Endothelial cell of umbilical vein (primary cell): ENCODE measurements at regions of chr12 and their contacts with region 1.

Region 1: DNA sequence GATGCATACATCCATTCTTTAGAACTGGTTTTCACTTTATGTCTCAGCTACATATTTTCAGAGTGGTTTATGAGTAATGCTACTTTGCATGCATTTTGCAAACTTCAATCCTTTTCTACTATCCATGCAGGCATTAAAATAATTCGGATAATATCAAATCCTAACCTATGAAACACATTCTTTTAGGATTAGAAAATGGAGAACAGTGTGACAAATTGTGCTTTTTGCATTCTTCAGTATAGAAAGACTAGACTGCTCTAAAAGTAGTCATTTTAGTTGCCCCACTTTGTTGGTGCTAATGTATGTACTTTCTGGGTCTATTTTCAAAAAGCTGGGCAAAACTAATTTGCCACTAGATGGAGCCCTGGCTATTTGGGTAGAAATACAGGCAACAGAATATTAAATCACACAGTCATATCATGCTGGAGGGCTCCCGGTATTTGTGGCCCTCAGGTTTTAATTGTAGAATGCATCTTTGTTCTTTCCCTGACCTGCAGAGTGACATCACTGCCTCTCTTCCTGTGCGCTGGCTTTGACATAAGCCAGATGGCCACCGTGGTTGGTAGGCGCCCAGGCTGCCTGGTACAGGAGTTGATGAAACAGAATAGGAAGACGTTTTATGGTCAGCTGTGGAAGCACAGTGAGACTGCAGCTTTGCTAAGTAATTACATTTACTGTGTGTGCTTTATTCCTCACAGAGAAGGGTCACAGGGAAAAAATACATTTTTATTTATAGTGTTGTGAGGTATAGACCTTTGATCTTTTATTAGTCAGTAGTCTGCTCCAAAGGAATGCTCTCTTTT is 28.1 kb downstream of the MSRB3 start:
- DNase-seq: peak; percentile 83
- H3K4me3 ChIP-seq: peak overlapping the region in 1 of 3 experiments; percentile 44
- H3K27ac ChIP-seq: peak overlapping the region; percentile 96
- H3K4me1 ChIP-seq: peaks cover 46% of the 10 kb centered on the region
- H3K27me3 ChIP-seq: no peaks in the 10 kb centered on the region
- CTCF ChIP-seq: peak; percentile 51 to 53
- POLR2A ChIP-seq: no peak

Region 2: GRCh38 chr12:64900540-64900939 is 406.0 kb before region 1 on chr12:
- CTCF ChIA-PET with region 1: no interaction called
- POLR2A ChIA-PET with region 1: no interaction called
- dilution Hi-C with region 1: no loop called
- intact Hi-C with region 1: no loop called
- DNase-seq: peak; percentile 27
- H3K4me3 ChIP-seq: no peak overlapping the region
- H3K27ac ChIP-seq: no peak overlapping the region
- H3K4me1 ChIP-seq: peaks cover 6% of the 10 kb centered on the region
- H3K27me3 ChIP-seq: no peaks in the 10 kb centered on the region
- CTCF ChIP-seq: no peak
- POLR2A ChIP-seq: no peak

Region 3: DNA sequence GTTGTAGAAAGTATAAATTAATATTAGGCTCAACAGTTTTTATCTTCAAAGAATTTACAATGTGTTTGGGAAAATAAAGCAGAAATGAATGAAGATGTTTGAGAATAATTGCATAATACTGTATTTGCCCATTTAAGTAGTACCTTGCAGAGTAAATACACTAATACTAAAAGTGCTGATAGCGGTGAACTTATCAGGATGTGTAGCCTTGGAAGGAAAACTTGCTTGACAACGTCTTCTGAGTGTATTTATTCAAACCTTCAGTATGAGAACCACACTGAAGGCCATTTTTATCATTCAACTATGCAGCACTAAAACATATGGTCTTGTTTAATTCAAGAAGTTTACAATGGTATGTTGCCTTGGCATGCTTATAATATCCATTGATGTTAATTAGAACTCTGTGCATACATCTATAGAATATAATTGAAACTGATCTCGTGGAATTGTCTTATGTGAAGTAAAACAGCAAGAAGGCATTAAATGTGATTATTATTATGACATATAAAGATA is 13.2 kb after region 1 on chr12:
- CTCF ChIA-PET with region 1: no interaction called
- POLR2A ChIA-PET with region 1: no interaction called
- dilution Hi-C with region 1: no loop called
- intact Hi-C with region 1: no loop called
- DNase-seq: no peak
- H3K4me3 ChIP-seq: no peak overlapping the region
- H3K27ac ChIP-seq: no peak overlapping the region
- H3K4me1 ChIP-seq: no peaks in the 10 kb centered on the region
- H3K27me3 ChIP-seq: no peaks in the 10 kb centered on the region
- CTCF ChIP-seq: no peak
- POLR2A ChIP-seq: no peak

Region 4: DNA sequence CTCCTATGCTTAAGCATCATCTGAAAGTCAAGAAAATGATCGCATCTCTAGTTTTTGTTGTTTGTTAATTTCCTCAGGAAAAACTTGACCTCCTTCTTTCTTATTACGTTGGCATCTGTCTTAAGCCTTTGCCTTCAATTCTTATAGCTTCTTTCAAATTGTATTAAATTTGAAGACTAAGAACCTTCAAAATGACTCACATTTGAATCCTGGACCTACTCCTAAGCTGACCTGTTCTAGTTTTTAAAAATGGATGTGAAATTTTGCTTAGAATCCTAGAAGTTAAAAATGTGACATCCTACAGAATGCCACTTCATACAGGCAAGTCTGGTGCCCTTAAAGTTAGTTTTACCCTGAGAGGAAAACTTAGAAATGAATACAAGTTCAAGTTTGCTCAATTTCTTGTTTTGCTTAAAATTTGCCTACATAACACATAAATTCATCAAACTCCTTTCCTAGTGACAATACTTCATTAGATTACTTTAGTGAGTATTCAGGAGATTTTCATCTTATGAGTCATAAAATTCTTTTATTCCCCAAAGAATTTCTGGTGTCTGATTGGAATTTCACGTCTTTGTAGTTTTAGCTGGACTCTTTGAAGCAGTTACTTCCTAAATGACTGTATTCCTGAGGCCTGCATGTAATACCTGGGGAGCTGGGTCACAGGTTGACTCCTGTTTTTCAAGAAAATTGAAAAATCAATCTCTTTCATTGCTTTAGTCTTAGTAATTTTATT is 124.2 kb after region 1 on chr12:
- CTCF ChIA-PET with region 1: no interaction called
- POLR2A ChIA-PET with region 1: no interaction called
- dilution Hi-C with region 1: no loop called
- intact Hi-C with region 1: loop called (anchors 2 kb)
- DNase-seq: peak; percentile 80
- H3K4me3 ChIP-seq: peak overlapping the region in 1 of 3 experiments; percentile 28
- H3K27ac ChIP-seq: peak overlapping the region; percentile 94
- H3K4me1 ChIP-seq: peaks cover 51% of the 10 kb centered on the region
- H3K27me3 ChIP-seq: no peaks in the 10 kb centered on the region
- CTCF ChIP-seq: no peak
- POLR2A ChIP-seq: peak; percentile 60

Region 5: DNA sequence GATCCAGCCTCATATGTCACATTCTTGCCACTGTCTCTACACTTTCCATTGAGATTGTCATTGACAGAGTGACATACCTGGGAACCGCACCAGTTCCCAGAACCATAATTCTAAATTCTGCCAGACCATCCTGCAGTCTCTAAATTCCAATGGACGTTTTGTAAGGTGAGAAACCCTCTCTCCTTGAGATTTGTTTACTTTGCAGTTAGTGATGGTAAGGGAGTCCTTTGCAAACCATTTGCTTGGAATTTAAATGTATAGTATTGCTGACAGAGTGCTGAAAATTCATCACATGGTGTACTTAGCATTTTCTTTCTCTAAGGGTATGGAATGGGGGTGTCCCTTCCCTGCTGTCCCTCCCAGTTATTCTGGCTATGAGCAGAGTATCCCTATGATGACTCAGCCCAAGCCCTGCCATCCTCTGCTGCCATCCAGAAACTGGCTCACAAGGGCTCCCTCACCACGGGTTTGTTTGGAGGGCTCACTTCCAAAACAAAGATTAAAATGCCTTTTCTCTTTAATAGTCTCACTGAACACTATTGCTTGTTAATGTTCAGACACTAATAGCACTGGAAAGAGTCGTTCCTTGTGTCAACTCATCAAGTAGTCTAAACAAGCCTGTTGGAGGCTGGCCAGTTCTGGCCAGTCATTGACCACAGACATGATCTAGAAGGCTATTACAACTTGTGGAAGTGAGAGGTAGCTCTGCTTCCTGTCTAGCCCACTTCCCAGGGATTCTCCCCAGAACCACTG is 388.7 kb after region 1 on chr12:
- CTCF ChIA-PET with region 1: no interaction called
- POLR2A ChIA-PET with region 1: no interaction called
- dilution Hi-C with region 1: no loop called
- intact Hi-C with region 1: loop called (anchors 2 kb)
- DNase-seq: peak; percentile 94
- H3K4me3 ChIP-seq: no peak overlapping the region
- H3K27ac ChIP-seq: peak overlapping the region; percentile 88
- H3K4me1 ChIP-seq: peaks cover 31% of the 10 kb centered on the region
- H3K27me3 ChIP-seq: no peaks in the 10 kb centered on the region
- CTCF ChIP-seq: no peak
- POLR2A ChIP-seq: peak; percentile 35

Region 6: GRCh38 chr12:65756956-65757511 is 450.5 kb after region 1 on chr12:
- CTCF ChIA-PET with region 1: no interaction called
- POLR2A ChIA-PET with region 1: no interaction called
- dilution Hi-C with region 1: no loop called
- intact Hi-C with region 1: no loop called
- DNase-seq: no peak
- H3K4me3 ChIP-seq: no peak overlapping the region
- H3K27ac ChIP-seq: no peak overlapping the region
- H3K4me1 ChIP-seq: no peaks in the 10 kb centered on the region
- H3K27me3 ChIP-seq: no peaks in the 10 kb centered on the region
- CTCF ChIP-seq: no peak
- POLR2A ChIP-seq: no peak

Region 7: GRCh38 chr12:65986047-65986446 is 679.5 kb after region 1 on chr12:
- CTCF ChIA-PET with region 1: interaction called, 6 read pairs
- POLR2A ChIA-PET with region 1: no interaction called
- dilution Hi-C with region 1: no loop called
- intact Hi-C with region 1: loop called (anchors 2 kb)
- DNase-seq: peak; percentile 28
- H3K4me3 ChIP-seq: no peak overlapping the region
- H3K27ac ChIP-seq: no peak overlapping the region
- H3K4me1 ChIP-seq: no peaks in the 10 kb centered on the region
- H3K27me3 ChIP-seq: no peaks in the 10 kb centered on the region
- CTCF ChIP-seq: peak in 1 of 2 donors; percentile 12
- POLR2A ChIP-seq: no peak

Region 8: DNA sequence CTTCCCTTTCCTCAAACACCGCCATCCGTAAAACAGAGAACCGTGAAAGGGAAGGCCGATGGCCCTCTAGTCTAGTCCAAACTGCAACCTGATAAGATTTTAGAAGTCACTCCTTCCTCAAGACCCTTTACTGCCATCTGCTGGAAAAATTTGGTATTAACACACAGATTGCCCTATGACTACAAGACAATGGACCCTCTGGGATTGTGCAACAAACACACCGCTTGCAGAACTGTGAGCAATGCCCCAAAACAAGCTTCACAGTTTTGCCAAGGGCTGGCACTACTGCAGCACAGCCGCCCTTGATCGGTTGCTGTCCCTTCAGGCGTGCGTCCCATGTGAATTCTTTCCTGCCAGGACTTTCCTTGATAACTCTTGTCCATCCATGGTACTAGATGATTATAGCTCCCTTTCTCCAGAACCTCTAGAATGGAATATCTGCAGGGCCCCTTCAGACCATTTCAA is 800.9 kb after region 1 on chr12:
- CTCF ChIA-PET with region 1: interaction called, 9 read pairs
- POLR2A ChIA-PET with region 1: no interaction called
- dilution Hi-C with region 1: no loop called
- intact Hi-C with region 1: loop called (anchors 1 kb)
- DNase-seq: peak; percentile 89
- H3K4me3 ChIP-seq: no peak overlapping the region
- H3K27ac ChIP-seq: no peak overlapping the region
- H3K4me1 ChIP-seq: peaks cover 2% of the 10 kb centered on the region
- H3K27me3 ChIP-seq: peaks cover 9 to 17% of the 10 kb centered on the region in 2 experiments
- CTCF ChIP-seq: peak; percentile 56 to 70
- POLR2A ChIP-seq: no peak